Activated T-helper 1 cell treated with anti-CD3 and anti-CD28 coated beads, Interleukin-12 subunit alpha, Interleukin-12 subunit beta, Interleukin-2, Interleukin-4 antibody, amounts not matched to agents 30 ng/mL and 10 ng/mL and 1 ng/mL, durations not matched to agents 14 hours and 24 hours and 36 hours (primary cell): ENCODE measurements at regions of chr1 and their contacts with region 1.

Region 1: GRCh38 chr1:185984113-185984836 is 250.1 kb downstream of the HMCN1 start:
- DNase-seq: no peak
- H3K4me3 Mint-ChIP-seq: no peak overlapping the region
- H3K27ac Mint-ChIP-seq: no peak overlapping the region
- H3K4me1 Mint-ChIP-seq: peaks cover 15% of the 10 kb centered on the region
- H3K27me3 Mint-ChIP-seq: peaks cover 8% of the 10 kb centered on the region

Region 2: GRCh38 chr1:185663332-185663731 is 320.9 kb before region 1 on chr1:
- intact Hi-C with region 1: no loop called
- DNase-seq: no peak
- H3K4me3 Mint-ChIP-seq: no peak overlapping the region
- H3K27ac Mint-ChIP-seq: no peak overlapping the region
- H3K4me1 Mint-ChIP-seq: peaks cover 20% of the 10 kb centered on the region
- H3K27me3 Mint-ChIP-seq: no peaks in the 10 kb centered on the region

Region 3: GRCh38 chr1:185917646-185918045 is 66.6 kb before region 1 on chr1:
- intact Hi-C with region 1: no loop called
- DNase-seq: no peak
- H3K4me3 Mint-ChIP-seq: no peak overlapping the region
- H3K27ac Mint-ChIP-seq: no peak overlapping the region
- H3K4me1 Mint-ChIP-seq: no peaks in the 10 kb centered on the region
- H3K27me3 Mint-ChIP-seq: peaks cover 2% of the 10 kb centered on the region

Region 4: GRCh38 chr1:185996211-185996610 is 11.9 kb after region 1 on chr1:
- intact Hi-C with region 1: no loop called
- DNase-seq: no peak
- H3K4me3 Mint-ChIP-seq: no peak overlapping the region
- H3K27ac Mint-ChIP-seq: no peak overlapping the region
- H3K4me1 Mint-ChIP-seq: no peaks in the 10 kb centered on the region
- H3K27me3 Mint-ChIP-seq: peaks cover 4% of the 10 kb centered on the region

Region 5: DNA sequence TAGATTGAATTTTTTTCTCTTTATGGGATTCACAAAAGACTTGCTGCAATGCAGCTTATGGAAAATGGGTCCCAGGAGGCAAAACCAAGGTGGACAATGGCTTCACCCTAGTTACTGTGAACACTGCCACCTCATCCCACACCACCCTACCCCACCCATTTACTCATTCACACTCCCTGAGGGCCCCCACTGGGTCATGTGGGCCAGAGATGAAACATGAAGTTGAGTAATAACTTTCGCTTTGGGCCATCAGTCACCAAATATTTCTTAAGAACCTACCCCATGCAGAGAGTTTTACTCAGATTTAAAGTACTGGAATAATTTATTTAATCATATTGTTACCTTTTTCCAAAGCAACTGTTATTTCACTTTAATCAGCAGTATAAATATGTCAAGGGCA is 198.9 kb after region 1 on chr1:
- intact Hi-C with region 1: loop called (anchors 10 kb)
- DNase-seq: no peak
- H3K4me3 Mint-ChIP-seq: no peak overlapping the region
- H3K27ac Mint-ChIP-seq: no peak overlapping the region
- H3K4me1 Mint-ChIP-seq: peaks cover 20% of the 10 kb centered on the region
- H3K27me3 Mint-ChIP-seq: peaks cover 21% of the 10 kb centered on the region

Region 6: DNA sequence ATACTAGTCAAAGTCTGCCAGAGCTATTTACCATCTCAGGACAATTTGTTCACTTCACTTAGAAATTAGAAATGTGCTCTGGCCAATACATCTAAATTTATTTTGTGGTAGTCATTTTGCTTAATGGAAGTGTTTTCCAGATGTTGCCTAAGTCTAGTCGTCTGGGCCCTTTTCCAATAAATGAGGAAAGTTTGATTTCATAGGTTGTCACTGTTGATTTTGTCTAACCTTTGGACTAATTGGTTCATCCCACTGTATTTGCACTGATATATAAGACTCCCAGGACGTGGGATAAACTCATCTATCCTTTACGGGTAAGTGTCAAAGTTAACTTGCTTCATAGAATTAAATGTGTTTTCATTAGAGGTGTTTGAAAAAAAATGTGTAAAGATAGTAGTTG is 311.7 kb after region 1 on chr1:
- intact Hi-C with region 1: loop called (anchors 10 kb)
- DNase-seq: no peak
- H3K4me3 Mint-ChIP-seq: peak within 1 kb of the TSS; percentile 50
- H3K27ac Mint-ChIP-seq: peak within 1 kb of the TSS; percentile 61
- H3K4me1 Mint-ChIP-seq: peaks cover 78% of the 10 kb centered on the region
- H3K27me3 Mint-ChIP-seq: no peaks in the 10 kb centered on the region